A673 (cell line): ENCODE measurements at regions of chr7 and their contacts with region 1.

Region 1: DNA sequence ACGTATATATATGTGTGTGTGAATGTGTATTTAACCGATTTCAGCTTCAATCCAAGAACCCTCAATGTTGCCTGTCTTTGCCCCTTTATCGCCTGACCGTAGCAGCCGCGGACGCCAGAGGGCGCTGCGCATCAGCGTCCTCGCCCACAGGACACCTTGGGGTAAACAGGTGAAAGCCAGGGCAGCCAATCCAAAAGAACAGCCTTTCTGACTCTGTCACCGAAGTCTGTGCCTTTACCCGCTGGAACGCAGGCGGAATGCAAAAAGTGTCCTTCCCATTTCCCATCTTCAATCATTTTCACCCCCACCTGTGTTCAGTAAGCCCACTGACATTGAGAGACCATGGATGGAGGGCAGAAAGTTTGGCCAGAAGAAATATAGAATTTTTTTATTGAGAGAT is 3.6 kb downstream of the NXPH1 start:
- DNase-seq: peak; percentile 46
- H3K4me3 ChIP-seq: no peak overlapping the region
- H3K27ac ChIP-seq: no peak overlapping the region
- H3K4me1 ChIP-seq: no peaks in the 10 kb centered on the region
- H3K27me3 ChIP-seq: peaks cover 99% of the 10 kb centered on the region
- CTCF ChIP-seq: peak; percentile 94

Region 2: GRCh38 chr7:8724080-8724718 is 287.2 kb after region 1 on chr7:
- CTCF ChIA-PET with region 1: no interaction called
- POLR2A ChIA-PET with region 1: no interaction called
- intact Hi-C with region 1: loop called (anchors 1 kb)
- DNase-seq: peak; percentile 54
- H3K4me3 ChIP-seq: no peak overlapping the region
- H3K27ac ChIP-seq: no peak overlapping the region
- H3K4me1 ChIP-seq: no peaks in the 10 kb centered on the region
- H3K27me3 ChIP-seq: no peaks in the 10 kb centered on the region
- CTCF ChIP-seq: peak; percentile 75

Region 3: DNA sequence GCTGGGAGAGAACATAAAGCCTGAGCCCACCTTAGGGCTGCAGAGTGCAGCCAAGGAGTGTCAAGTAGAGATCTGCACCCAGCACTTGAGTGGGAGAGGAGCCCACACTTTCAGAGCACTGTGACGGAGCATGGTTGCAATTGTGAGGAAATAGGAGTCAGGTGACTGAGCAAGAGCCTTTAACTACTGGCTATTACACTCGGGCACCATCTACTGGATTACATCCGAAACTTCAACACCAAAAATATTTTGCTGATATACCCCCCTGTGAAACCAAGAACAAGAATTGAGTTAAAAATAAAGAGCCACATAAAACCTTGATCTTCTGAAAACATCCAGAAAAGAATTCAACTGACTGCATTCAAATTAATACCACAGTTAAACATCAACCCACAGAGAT is 654.3 kb after region 1 on chr7:
- CTCF ChIA-PET with region 1: no interaction called
- POLR2A ChIA-PET with region 1: no interaction called
- intact Hi-C with region 1: loop called (anchors 5 kb)
- DNase-seq: no peak
- H3K4me3 ChIP-seq: no peak overlapping the region
- H3K27ac ChIP-seq: no peak overlapping the region
- H3K4me1 ChIP-seq: no peaks in the 10 kb centered on the region
- H3K27me3 ChIP-seq: no peaks in the 10 kb centered on the region
- CTCF ChIP-seq: 0 out of 2 replicates have a peak, but pooled peaks have one; percentile 9

Region 4: GRCh38 chr7:9175871-9176270 is 738.9 kb after region 1 on chr7:
- CTCF ChIA-PET with region 1: no interaction called
- POLR2A ChIA-PET with region 1: no interaction called
- intact Hi-C with region 1: no loop called
- DNase-seq: no peak
- H3K4me3 ChIP-seq: no peak overlapping the region
- H3K27ac ChIP-seq: no peak overlapping the region
- H3K4me1 ChIP-seq: no peaks in the 10 kb centered on the region
- H3K27me3 ChIP-seq: no peaks in the 10 kb centered on the region
- CTCF ChIP-seq: no peak

Region 5: DNA sequence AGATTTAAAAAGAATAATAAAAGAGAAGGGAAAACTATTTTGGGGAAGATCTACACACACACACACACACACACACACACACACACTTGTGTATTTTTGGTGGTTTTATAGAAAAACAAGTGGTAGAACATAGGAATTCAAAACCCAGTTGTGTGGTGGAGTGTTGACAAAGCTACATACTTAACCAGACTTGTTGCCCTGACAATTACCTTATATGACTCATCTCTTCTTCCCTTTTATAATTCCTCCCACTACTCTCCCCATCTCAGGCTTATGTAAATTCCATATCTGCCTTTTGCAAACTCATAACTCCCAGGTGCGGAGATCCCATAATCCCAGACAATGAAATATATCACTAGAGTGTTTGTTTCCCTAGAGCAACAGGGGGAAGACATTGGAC is 870.2 kb after region 1 on chr7:
- CTCF ChIA-PET with region 1: no interaction called
- POLR2A ChIA-PET with region 1: no interaction called
- intact Hi-C with region 1: no loop called
- DNase-seq: no peak
- H3K4me3 ChIP-seq: no peak overlapping the region
- H3K27ac ChIP-seq: no peak overlapping the region
- H3K4me1 ChIP-seq: no peaks in the 10 kb centered on the region
- H3K27me3 ChIP-seq: no peaks in the 10 kb centered on the region
- CTCF ChIP-seq: no peak